Breast epithelium (tissue), 4 donors: ENCODE measurements at regions of chr11 and their contacts with region 1.

Region 1: DNA sequence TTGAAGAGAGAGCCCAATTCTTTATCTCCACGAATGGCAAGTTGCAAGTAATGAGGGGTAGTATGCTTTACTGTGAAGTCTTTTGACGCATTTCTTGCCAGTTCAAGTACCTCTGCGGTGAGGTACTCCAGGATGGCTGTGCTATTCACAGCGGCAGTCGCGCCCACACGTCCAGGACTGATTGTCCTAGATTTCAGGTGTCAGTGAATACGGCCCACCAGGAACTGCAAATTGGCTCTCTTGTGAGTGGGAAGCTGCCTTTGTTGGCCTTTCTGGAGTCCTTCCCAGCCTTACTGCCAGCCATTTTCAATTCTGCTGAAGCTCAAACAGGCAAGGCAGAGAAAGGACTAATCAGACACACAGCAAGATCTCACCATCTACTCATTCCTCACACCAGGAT is 8.5 kb downstream of the PPFIA1 start:
- DNase-seq: no peak
- H3K4me3 ChIP-seq: no peak overlapping the region
- H3K27ac ChIP-seq: no peak overlapping the region
- H3K4me1 ChIP-seq: no peaks in the 10 kb centered on the region
- H3K27me3 ChIP-seq: no peaks in the 10 kb centered on the region
- CTCF ChIP-seq: no peak
- POLR2A ChIP-seq: no peak

Region 2: DNA sequence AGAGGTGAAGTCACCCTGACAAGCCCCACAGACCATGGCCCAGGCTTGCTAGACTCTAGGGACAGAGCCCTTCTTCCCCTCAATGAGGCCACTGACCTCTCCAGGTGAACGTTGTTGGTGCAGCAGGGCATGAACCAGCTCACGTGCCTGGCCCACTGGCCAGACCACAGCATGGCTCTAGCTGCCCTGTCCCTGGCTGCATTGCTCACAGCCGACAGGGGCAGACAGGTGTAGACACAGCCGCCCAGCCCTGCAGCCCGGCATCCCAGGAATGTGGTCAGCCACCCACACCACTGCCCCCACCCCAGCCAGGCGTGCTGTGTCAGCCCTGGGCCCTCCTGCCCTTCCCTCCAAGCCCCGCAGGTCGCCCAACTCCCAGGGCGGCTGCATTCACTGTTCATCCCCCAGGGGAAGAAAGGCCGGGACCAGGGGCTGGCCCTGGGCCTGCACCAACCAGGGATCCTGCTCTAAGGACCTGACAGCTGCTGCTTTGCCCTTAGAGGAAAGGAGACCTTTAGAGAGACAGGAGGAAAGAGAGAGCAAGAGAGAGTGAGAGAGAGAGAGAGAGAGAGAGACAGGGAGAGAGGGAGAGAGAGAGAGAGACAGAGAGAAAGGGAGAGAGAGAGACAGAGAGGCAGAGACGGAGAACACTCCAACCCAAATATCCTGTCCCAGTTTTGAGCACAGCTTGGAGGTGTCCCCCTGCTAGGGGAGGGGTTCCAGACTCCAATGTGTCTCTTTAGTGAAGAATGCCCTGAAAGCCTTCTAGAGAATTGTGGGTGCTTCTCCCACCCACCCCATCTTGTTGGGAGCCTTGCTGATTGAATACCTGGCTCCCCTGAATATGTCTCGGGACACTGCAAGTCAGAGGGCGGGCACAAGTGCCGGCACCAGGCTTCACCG is 841.8 kb before region 1 on chr11:
- intact Hi-C with region 1: loop called (anchors 5 kb)
- DNase-seq: no peak
- H3K4me3 ChIP-seq: no peak overlapping the region
- H3K27ac ChIP-seq: no peak overlapping the region
- H3K4me1 ChIP-seq: no peaks in the 10 kb centered on the region
- H3K27me3 ChIP-seq: no peaks in the 10 kb centered on the region
- CTCF ChIP-seq: no peak
- POLR2A ChIP-seq: no peak